ENCODE measurements at regions of chr9 and their contacts with region 1.

Region 1: DNA sequence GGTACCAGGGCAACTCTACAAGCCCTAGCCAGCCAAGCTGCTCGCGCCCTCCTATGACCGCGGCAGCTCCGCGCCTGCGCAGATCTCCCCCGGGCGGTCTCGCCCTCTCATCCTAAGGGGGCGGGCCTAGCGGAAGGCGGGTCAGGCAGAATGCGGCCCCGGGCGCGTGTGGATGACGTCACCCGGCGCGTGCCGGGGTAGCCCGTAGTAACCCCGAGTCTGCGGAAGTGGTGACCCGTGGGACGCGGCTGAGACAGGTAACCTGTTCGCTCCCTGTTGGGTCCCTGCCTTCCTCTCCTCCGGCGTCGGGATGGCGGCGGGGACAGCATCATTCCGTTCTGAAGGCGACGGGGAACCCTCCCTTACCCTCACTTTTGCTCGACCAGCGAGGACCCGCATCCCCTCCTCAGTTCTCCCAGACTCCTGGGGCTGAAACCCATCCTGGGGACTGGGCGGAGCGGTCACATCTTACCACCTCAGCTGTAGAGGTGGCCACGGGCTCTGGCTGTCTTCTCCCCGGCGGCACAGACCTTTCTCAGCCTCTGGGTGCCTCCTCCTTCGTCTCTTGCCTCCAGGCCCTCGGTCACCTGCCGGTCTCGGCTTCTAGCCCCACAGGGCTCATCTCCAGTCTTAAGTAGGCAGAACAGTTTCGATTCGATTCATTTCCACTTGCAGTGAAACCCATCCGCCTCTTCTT is at the start of gene AOPEP:
- DNase-seq: peak; percentile 99
- H3K4me3 Mint-ChIP-seq: peak within 1 kb of the TSS; percentile 99
- H3K27ac Mint-ChIP-seq: peak within 1 kb of the TSS; percentile 95
- H3K4me1 Mint-ChIP-seq: peaks cover 12% of the 10 kb centered on the region
- H3K27me3 Mint-ChIP-seq: no peaks in the 10 kb centered on the region
- total RNA-seq, gene AOPEP: 5.8 to 6.4 TPM

Region 2: DNA sequence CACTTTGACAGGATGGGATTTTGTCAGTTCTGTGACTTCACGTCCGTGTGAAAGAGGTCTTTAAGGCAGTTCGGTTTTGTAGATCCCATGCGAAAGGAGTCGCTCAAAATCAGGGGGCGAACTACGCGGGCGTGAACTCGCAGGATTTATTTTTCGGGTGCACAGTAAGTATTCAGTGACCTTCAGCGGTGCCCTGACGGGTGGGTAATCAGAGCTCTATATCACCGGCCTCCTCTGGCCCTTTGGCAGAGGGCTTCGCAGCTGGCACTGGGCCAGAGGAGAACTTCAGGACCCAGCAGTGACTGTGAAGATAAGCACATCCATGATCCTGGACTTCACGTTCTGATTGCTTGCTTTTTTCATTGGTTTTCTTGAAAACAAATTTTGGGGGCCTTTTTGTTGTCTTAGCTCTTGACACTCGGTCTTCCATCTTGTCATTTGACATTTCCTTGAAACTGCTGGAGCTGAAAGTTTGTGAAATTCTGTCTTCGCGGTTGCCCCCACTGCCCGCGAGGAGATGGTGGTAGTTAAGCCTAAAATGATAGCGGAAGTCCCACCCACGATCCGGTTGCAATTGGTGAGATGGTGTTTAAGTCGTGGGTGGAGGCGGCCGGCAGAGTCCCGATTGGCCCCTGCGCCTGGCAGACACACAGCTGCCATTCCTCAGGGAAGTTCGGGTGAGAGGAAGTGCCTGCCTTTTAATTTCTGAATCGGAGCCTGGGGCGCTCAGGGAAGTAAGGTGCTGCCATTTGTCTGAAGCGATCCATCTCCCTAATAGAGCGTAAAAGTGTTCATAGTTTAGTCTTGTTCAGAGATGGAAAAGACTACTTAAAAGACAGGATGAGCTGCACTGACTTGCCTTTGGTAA is 1273.4 kb before region 1 on chr9 and contains the start of gene FAM120AOS:
- CTCF ChIA-PET with region 1: no interaction called
- intact Hi-C with region 1: no loop called
- DNase-seq: peak; percentile 92
- H3K4me3 Mint-ChIP-seq: peak within 1 kb of the TSS; percentile 87
- H3K27ac Mint-ChIP-seq: peak within 1 kb of the TSS; percentile 84
- H3K4me1 Mint-ChIP-seq: peaks cover 45% of the 10 kb centered on the region
- H3K27me3 Mint-ChIP-seq: no peaks in the 10 kb centered on the region
- total RNA-seq, gene FAM120AOS: 25.5 to 26.0 TPM

Region 3: DNA sequence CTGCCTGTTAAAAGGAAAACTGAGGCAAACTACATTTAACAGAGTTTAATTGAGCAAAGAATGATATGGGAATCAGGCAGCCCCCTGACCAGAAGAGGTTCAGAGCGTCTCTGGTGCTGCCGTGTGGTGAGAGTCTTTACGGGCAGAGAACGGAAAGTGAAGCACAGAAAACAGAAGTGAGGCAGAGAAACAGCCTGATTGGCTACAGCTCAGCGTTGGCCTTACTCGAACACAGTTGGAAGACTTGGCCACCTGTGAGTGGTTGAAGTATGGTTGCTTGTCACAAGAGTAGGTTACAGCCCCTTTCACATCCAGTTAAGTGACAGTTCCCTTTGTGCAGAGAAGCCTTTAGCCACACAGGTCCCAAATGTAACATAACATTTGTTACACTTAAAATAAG is 70.4 kb before region 1 on chr9:
- CTCF ChIA-PET with region 1: no interaction called
- intact Hi-C with region 1: loop called (anchors 1 kb)
- DNase-seq: peak; percentile 82
- H3K4me3 Mint-ChIP-seq: peak overlapping the region; percentile 73
- H3K27ac Mint-ChIP-seq: peak overlapping the region; percentile 79
- H3K4me1 Mint-ChIP-seq: peaks cover 20% of the 10 kb centered on the region
- H3K27me3 Mint-ChIP-seq: no peaks in the 10 kb centered on the region

Region 4: GRCh38 chr9:94672811-94673487 is 53.7 kb before region 1 on chr9:
- CTCF ChIA-PET with region 1: interaction called, 3 read pairs
- intact Hi-C with region 1: loop called (anchors 1 kb)
- DNase-seq: no peak
- H3K4me3 Mint-ChIP-seq: no peak overlapping the region
- H3K27ac Mint-ChIP-seq: no peak overlapping the region
- H3K4me1 Mint-ChIP-seq: peaks cover 3% of the 10 kb centered on the region
- H3K27me3 Mint-ChIP-seq: no peaks in the 10 kb centered on the region

Region 5: GRCh38 chr9:94860968-94861871 is 134.6 kb after region 1 on chr9:
- CTCF ChIA-PET with region 1: no interaction called
- intact Hi-C with region 1: loop called (anchors 2 kb)
- DNase-seq: peak; percentile 83
- H3K4me3 Mint-ChIP-seq: peak overlapping the region; percentile 28
- H3K27ac Mint-ChIP-seq: peak overlapping the region; percentile 54
- H3K4me1 Mint-ChIP-seq: peaks cover 38% of the 10 kb centered on the region
- H3K27me3 Mint-ChIP-seq: no peaks in the 10 kb centered on the region

Region 6: GRCh38 chr9:94952565-94953373 is 226.1 kb after region 1 on chr9:
- CTCF ChIA-PET with region 1: no interaction called
- intact Hi-C with region 1: loop called (anchors 1 kb)
- DNase-seq: peak; percentile 44
- H3K4me3 Mint-ChIP-seq: no peak overlapping the region
- H3K27ac Mint-ChIP-seq: no peak overlapping the region
- H3K4me1 Mint-ChIP-seq: peaks cover 39% of the 10 kb centered on the region
- H3K27me3 Mint-ChIP-seq: no peaks in the 10 kb centered on the region

Region 7: GRCh38 chr9:95143591-95144561 is 417.2 kb after region 1 on chr9:
- CTCF ChIA-PET with region 1: no interaction called
- intact Hi-C with region 1: no loop called
- DNase-seq: no peak
- H3K4me3 Mint-ChIP-seq: no peak overlapping the region
- H3K27ac Mint-ChIP-seq: no peak overlapping the region
- H3K4me1 Mint-ChIP-seq: no peaks in the 10 kb centered on the region
- H3K27me3 Mint-ChIP-seq: no peaks in the 10 kb centered on the region

Region 8: GRCh38 chr9:95317119-95317892 is 590.7 kb after region 1 on chr9 and contains the start of gene FANCC:
- CTCF ChIA-PET with region 1: no interaction called
- intact Hi-C with region 1: loop called (anchors 5 kb)
- DNase-seq: peak; percentile 85
- H3K4me3 Mint-ChIP-seq: peak within 1 kb of the TSS; percentile 91
- H3K27ac Mint-ChIP-seq: peak within 1 kb of the TSS; percentile 93
- H3K4me1 Mint-ChIP-seq: peaks cover 18% of the 10 kb centered on the region
- H3K27me3 Mint-ChIP-seq: peaks cover 6% of the 10 kb centered on the region
- total RNA-seq, gene FANCC: 14.1 to 14.5 TPM

Region 9: GRCh38 chr9:95875305-95876137 is 1148.9 kb after region 1 on chr9 and contains the start of gene ERCC6L2:
- CTCF ChIA-PET with region 1: no interaction called
- intact Hi-C with region 1: loop called (anchors 5 kb)
- DNase-seq: peak; percentile 96
- H3K4me3 Mint-ChIP-seq: no peak within 1 kb of the TSS
- H3K27ac Mint-ChIP-seq: no peak within 1 kb of the TSS
- H3K4me1 Mint-ChIP-seq: peaks cover 24% of the 10 kb centered on the region
- H3K27me3 Mint-ChIP-seq: no peaks in the 10 kb centered on the region
- total RNA-seq, gene ERCC6L2: 20.3 to 20.6 TPM

Measured in activated naive CD4-positive, alpha-beta T cell treated with anti-CD3 and anti-CD28 coated beads for 36 hours (primary cell).